Activated CD4-positive, alpha-beta memory T cell treated with anti-CD3 and anti-CD28 coated beads for 36 hours (primary cell): ENCODE measurements at regions of chr14 and their contacts with region 1.

Region 1: GRCh38 chr14:21748869-21749303 is 75.3 kb upstream of the OR4E1 start:
- DNase-seq: peak; percentile 70
- H3K4me3 Mint-ChIP-seq: peak overlapping the region; percentile 67
- H3K27ac Mint-ChIP-seq: peak overlapping the region; percentile 36
- H3K4me1 Mint-ChIP-seq: peaks cover 8% of the 10 kb centered on the region
- H3K27me3 Mint-ChIP-seq: peaks cover 3% of the 10 kb centered on the region

Region 2: DNA sequence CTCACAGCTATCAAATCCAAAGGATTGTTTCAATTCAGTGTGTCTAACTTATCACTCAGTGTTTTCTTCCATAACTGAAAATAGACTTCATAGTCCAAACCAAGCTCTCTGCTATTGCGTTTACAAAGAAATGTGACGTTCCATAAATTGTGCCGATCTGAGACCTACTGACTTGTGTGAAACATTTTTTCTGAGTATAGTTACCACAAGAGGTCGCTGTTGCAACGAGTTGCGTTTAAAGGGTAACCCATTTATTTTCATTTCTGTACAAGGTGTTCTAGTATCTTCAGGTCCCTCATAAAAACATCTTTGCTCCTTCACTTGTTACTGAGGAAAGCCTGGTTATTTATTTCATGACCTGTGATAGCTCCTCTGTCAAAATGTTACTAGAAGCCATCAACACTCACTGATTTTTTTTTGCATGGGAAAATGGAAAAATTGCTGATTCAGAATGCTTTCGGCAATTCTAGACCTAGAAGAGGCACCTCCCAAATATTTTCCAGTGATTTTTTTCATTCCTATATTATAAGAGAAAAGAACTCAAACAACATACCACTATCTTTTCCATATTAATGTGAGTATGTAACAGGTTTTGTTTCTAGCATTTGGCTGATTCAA is 14.3 kb before region 1 on chr14:
- CTCF ChIA-PET with region 1: interaction called, 19 read pairs
- POLR2A ChIA-PET with region 1: no interaction called
- intact Hi-C with region 1: no loop called
- DNase-seq: peak; percentile 37
- H3K4me3 Mint-ChIP-seq: peak overlapping the region; percentile 36
- H3K27ac Mint-ChIP-seq: peak overlapping the region; percentile 31
- H3K4me1 Mint-ChIP-seq: peaks cover 11% of the 10 kb centered on the region
- H3K27me3 Mint-ChIP-seq: peaks cover 41% of the 10 kb centered on the region

Region 3: DNA sequence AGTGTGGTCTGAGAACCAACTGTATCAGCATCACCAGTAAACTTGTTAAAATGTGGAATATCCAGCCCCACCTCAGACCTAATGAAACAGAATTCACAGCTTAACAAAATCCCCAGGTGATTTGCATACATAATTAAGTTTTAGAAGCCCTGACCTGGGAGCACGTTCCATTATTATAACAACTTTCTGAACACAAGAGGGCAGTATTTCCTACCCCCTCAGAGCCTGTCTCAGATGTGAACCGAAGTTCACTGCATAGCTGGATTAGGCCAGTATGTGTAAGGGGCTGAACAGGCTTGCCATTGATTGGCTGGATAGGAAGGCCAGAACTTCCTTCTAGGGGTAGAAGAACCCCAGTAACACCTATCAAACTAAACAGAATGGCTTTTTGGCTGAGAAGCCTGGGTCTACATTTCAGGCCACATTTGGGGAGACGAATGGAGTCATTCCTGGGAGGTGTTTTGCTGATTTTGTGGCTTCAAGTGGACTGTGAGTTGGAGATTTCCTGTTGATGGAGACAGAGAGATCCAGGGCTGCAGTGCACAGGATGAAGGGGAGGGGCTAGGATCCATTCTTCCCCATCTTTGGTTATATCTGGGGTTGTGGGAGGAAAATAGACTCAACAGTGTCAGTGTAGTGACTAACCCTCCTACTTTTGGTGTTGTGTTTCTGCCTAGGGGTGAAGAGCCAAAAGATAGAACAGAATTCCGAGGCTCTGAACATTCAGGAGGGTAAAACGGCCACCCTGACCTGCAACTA is 19.4 kb after region 1 on chr14:
- CTCF ChIA-PET with region 1: interaction called, 20 read pairs
- POLR2A ChIA-PET with region 1: no interaction called
- intact Hi-C with region 1: no loop called
- DNase-seq: peak; percentile 29
- H3K4me3 Mint-ChIP-seq: peak overlapping the region; percentile 60
- H3K27ac Mint-ChIP-seq: peak overlapping the region; percentile 66
- H3K4me1 Mint-ChIP-seq: peaks cover 5% of the 10 kb centered on the region
- H3K27me3 Mint-ChIP-seq: peaks cover 3% of the 10 kb centered on the region

Region 4: DNA sequence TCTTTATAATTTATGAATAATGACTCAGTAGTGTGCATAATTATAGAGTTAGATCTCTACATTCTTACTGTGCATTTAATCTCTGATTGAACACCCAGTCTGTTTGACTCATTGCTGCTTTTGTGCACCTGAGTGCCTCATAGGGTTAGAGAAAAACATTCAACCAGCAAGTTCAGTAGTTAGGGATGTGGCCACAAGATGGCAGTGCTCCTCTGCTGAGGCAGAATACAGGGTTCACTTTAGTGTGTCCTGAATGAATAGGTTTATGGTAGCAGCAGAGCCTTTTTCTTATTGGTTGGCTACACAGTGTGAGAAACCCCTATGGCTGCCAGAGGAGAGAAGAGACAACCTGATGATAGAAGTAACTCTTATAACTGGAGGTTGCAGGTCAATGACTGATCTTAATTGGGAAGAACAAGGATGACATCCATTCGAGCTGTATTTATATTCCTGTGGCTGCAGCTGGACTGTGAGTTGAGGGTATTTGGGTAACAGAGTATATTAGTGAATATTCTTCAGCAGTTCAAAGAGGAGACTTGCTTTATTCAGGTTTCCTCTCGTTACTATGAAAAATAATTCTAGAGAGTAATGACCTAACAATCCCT is 119.7 kb after region 1 on chr14:
- CTCF ChIA-PET with region 1: no interaction called
- POLR2A ChIA-PET with region 1: no interaction called
- intact Hi-C with region 1: no loop called
- DNase-seq: peak; percentile 89
- H3K4me3 Mint-ChIP-seq: peak overlapping the region; percentile 68
- H3K27ac Mint-ChIP-seq: peak overlapping the region; percentile 82
- H3K4me1 Mint-ChIP-seq: peaks cover 41% of the 10 kb centered on the region
- H3K27me3 Mint-ChIP-seq: no peaks in the 10 kb centered on the region